Posterior vena cava (tissue), 2 donors: ENCODE measurements at regions of chr12 and their contacts with region 1.

Region 1: GRCh38 chr12:117063162-117063911 is 35.9 kb downstream of the TESC start:
- DNase-seq: no peak

Region 2: DNA sequence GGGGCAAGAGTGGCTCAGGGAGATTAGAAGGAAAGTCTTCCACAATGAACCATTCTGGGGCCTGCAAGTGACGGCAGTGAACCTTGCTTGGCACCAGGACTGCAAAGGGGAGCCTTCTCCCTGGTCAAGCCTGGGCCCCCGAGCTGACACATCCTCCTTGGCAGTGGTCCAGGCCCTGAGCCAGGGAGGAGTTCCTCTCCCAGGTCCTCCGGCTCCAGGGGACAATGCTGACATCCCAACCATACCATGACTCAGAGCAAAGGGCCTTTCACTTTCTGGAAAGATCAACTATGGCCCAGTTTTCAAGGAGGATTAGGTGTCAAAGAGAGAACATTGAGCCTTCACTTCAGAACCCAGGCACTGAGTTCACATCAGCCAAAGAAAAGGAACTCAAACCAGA is 1622.9 kb before region 1 on chr12:
- intact Hi-C with region 1: no loop called
- DNase-seq: no peak

Region 3: DNA sequence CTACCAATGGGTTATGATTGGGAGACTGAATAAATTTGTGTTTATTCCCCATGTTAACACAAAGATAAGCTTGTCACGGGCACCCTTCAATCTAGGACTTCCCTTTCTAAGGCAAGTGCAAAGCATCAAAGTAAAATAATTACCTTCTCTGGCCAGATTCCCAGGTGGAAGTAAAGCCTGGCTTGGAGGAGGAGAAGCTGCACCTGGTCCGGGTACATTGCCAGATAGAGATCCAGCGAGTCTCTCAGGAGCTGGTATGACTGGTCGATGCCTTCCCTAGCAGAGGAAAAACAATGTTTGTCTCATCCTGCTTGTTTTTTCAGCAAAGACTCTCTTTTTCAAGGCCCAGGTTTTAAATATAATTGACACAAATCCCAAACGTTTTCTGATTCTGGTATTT is 102.0 kb after region 1 on chr12:
- intact Hi-C with region 1: no loop called
- DNase-seq: no peak

Region 4: DNA sequence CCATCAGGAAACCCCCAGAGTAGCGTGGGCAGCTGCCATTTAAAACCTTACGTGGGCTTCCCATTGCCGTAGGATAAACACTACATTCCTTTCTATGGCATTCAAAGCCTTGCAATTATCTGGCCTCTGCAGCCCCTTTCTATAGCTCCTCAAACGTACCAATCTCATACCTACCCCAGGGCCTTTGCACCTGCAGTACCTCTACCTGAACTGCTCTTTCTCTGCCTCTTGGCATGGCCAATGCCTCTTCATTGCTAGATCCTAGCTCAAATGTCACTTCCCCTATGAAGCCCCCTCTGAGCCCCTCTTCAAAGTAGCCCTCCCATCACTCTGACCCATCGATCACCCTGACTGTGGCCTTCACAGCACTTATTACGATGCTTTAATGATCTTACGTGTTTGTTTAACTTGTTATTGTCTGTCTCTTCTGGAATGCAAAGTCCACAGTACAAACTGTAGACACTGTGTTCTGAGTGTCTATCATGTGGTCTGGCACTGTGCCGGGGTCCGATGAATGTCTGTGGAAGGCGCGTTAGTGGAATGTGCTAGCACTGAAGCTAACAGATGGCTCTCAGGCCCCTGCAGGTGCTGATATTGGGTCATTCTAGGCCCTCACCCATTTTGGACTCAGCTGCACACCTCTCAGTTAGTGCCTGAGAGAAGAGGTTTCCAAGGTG is 455.4 kb after region 1 on chr12:
- intact Hi-C with region 1: loop called in 1 of 2 experiments (anchors 5 kb)
- DNase-seq: no peak